ENCODE measurements at regions of chr1 and their contacts with region 1.

Region 1: DNA sequence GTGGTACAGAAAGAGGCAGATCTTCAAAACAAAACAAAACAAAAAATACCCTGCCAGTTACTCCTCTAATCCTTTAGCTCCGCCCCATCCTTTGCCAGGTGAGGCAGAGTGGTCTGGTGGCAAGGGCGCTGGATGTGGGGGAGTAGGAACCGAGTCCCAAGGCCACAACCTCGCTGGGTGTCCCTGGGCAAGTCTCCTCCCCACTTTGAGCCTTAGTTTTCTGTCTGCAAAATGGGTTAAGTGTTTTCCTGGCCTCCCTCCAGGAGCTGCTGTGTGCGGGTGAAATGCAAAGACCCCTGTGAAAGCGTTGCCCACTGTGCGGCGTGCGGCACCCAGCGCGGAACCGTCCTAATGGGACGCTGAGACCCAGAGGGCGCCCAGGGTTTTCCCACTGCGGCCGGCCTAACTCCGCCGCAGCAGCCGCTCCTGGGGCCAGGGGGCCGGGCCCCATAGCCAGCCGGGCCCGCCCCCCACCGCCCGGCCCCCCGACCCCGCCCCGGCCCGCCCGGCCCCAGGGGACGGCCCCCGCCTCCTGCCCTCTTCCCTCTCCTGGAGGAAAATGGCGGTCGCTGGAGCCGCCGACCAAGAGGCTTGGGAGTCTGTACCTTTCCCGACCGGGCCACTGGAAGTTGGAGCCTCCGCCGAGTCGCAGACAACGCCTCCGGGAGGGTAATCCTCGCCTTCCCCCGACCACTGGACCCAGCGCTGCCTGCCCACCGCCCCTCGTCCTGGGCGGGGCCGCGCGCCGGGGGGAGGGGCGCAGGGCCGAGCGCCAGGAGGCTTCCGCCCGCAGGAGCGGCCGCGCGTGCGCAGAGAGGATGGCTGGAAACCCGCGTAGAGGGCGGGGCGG is at the starts of genes ERMAP and SVBP:
- DNase-seq: peak; percentile 93
- ATAC-seq: peak; percentile 99
- total RNA-seq, gene ERMAP: 4.0 to 4.3 TPM
- total RNA-seq, gene SVBP: 10.6 to 14.2 TPM

Region 2: DNA sequence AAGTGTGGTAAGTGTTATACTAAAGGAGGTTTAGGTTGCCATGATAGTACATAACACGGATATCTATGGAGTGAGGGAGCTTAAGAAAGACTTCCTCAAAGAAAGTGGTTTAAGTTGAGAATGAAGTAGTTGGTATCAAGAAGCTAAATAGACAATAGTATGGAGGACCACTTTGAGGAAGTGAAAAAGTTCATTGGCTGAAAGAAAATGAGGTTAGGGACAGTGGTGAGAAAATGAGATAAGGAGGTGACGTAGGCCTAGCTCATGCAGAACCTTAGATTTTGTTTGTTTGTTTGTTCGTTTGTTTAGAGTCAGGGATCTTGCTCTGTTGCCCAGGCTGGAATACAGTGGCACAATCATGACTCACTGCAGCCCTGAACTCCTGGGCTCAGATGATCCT is 230.8 kb before region 1 on chr1:
- intact Hi-C with region 1: no loop called
- DNase-seq: no peak
- ATAC-seq: no peak

Region 3: DNA sequence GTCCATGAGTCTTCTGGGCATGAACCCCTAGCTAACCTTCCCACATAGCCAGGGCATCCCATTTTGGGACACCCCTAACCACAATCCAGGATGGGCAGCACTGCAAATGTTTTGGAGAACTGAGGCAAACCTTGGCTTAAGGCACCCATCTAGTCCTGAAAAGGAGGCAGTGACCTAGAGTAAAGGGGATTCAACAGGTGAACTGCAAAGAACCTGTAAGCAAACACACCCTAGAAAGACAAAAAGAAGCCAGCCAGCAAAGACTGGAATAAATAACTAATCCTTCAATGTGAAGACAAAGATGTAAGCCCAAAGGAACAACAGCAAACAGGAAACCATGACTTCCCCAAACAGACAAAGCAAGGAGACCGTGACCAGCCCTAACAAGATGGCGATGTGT is 215.3 kb before region 1 on chr1:
- intact Hi-C with region 1: no loop called
- DNase-seq: no peak
- ATAC-seq: no peak

Region 4: GRCh38 chr1:42766741-42767509 is 49.9 kb before region 1 on chr1 and contains the starts of genes C1orf50 and P3H1:
- intact Hi-C with region 1: loop called in 1 of 2 experiments (anchors 5 kb)
- DNase-seq: peak; percentile 100
- ATAC-seq: peak; percentile 95 to 96
- total RNA-seq, gene C1orf50: 5.1 to 7.7 TPM
- total RNA-seq, gene P3H1: 16.2 to 17.7 TPM